Mammary epithelial cell (primary cell): ENCODE measurements at regions of chr16 and their contacts with region 1.

Region 1: DNA sequence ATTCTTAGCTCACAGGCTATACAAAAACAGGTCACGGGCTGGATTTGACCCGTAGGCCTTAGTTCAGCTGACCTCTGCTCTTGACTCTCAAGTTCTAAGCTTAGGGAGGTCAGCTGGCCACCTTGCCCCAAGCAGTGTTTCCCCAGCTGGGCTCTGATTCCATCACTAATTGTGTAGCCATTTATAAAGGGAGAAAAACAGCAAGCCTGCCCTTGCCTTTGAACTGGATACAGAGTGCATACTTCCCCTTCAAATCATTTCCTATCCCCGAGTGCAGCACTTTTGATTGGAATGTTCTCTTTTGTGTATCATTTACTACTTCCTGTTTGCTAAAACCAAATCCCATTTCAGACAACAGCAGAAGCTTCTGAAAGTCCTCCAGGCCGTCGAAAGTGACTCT is 153.6 kb downstream of the KATNIP start:
- DNase-seq: no peak
- H3K4me3 ChIP-seq: no peak overlapping the region
- H3K27ac ChIP-seq: no peak overlapping the region
- H3K4me1 ChIP-seq: no peaks in the 10 kb centered on the region
- H3K27me3 ChIP-seq: no peaks in the 10 kb centered on the region
- CTCF ChIP-seq: no peak

Region 2: GRCh38 chr16:27625050-27625697 is 78.4 kb before region 1 on chr16:
- CTCF ChIA-PET with region 1: no interaction called
- dilution Hi-C with region 1: loop called (anchors 5 kb)
- in situ Hi-C with region 1: no loop called
- intact Hi-C with region 1: no loop called
- DNase-seq: no peak
- H3K4me3 ChIP-seq: no peak overlapping the region
- H3K27ac ChIP-seq: no peak overlapping the region
- H3K4me1 ChIP-seq: no peaks in the 10 kb centered on the region
- H3K27me3 ChIP-seq: no peaks in the 10 kb centered on the region
- CTCF ChIP-seq: no peak

Region 3: DNA sequence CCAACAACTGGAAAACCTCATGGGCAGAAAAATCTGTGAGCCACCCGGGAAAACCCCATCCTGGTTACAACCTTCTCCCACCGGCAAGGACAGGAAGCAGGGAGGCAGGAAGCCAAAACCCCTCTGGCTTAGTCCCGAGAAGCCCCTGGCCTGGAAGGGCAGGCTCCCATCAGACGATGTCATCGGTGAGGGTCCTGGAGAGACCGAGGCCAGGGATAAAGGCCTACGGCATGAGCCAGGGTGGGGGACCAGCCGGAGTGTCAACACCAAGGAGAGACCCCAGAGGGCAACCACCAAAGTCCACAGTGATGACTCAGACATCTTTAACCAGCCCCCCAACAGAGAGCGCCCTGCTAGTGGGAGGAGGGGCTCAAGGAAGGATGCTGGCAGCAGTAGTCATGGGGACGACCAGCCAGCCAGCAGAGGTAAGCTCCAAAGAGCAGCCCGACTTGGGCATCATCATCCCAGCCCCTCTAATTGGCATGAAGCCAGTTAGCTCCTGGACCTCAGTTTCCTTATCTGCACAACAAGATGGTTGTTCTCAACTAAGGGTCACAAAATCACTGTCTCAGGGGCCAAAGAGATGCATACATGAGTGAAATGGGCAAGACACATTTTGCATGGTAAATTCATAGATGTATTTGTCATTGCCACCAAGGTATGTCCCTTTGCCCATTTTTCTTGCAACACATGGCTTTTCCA is 37.1 kb after region 1 on chr16:
- CTCF ChIA-PET with region 1: no interaction called
- dilution Hi-C with region 1: loop called (anchors 5 kb)
- in situ Hi-C with region 1: no loop called
- intact Hi-C with region 1: no loop called
- DNase-seq: no peak
- H3K4me3 ChIP-seq: no peak overlapping the region
- H3K27ac ChIP-seq: no peak overlapping the region
- H3K4me1 ChIP-seq: no peaks in the 10 kb centered on the region
- H3K27me3 ChIP-seq: no peaks in the 10 kb centered on the region
- CTCF ChIP-seq: no peak